ENCODE measurements at regions of chr10 and their contacts with region 1.

Region 1: GRCh38 chr10:91251430-91252056 is 31.1 kb downstream of the PCGF5 start:
- DNase-seq: peak; percentile 31 to 65 (median 41)
- H3K4me3 ChIP-seq: no peak overlapping the region
- H3K27ac ChIP-seq: no peak overlapping the region
- H3K4me1 ChIP-seq: no peaks in the 10 kb centered on the region
- H3K27me3 ChIP-seq: no peaks in the 10 kb centered on the region
- CTCF ChIP-seq: peak; percentile 86 to 90 (median 90)
- EP300 ChIP-seq: no peak
- POLR2A ChIP-seq: no peak

Region 2: GRCh38 chr10:90912174-90912573 is 339.4 kb before region 1 on chr10:
- intact Hi-C with region 1: loop called in 3 of 4 experiments (anchors 5 to 10 kb)
- DNase-seq: no peak
- H3K4me3 ChIP-seq: no peak overlapping the region
- H3K27ac ChIP-seq: no peak overlapping the region
- H3K4me1 ChIP-seq: no peaks in the 10 kb centered on the region
- H3K27me3 ChIP-seq: no peaks in the 10 kb centered on the region
- CTCF ChIP-seq: no peak
- EP300 ChIP-seq: no peak
- POLR2A ChIP-seq: no peak

Region 3: DNA sequence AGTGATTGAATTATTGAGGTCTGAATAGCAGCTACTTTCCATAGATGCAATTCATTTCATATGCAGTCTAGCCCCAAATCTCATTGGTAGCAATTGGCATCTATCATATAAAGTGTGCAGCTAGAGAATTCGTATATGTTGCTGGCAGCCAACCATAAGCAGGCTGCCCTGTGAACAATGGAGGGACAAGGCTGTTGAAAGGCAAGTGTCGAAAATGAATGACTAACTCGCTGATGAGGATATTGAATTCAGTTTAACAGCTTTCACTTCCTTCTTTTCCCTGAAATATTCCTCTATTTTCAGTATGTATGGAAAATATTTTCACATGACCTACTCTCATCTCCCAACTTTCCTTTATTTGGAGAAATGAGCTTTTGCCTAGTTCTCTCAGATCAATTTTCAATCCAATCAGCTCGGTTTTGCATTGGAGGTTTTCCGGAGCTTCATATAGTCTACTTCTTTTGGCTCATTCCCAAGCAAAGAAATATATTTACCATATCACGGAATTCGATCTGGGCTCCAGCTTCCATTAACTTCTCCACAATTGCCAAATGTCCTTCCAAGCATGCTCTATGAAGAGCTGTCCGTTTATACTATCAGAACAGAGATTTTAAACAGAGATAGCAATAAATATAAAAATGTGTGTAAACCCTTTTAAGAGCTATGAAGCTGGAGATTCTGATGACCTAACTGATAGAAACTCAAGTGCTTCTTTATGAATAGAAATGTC is 334.1 kb before region 1 on chr10:
- intact Hi-C with region 1: loop called in 3 of 4 experiments (anchors 5 to 10 kb)
- DNase-seq: no peak
- H3K4me3 ChIP-seq: no peak overlapping the region
- H3K27ac ChIP-seq: no peak overlapping the region
- H3K4me1 ChIP-seq: peaks cover 1% of the 10 kb centered on the region
- H3K27me3 ChIP-seq: no peaks in the 10 kb centered on the region
- CTCF ChIP-seq: no peak
- EP300 ChIP-seq: no peak
- POLR2A ChIP-seq: no peak

Region 4: DNA sequence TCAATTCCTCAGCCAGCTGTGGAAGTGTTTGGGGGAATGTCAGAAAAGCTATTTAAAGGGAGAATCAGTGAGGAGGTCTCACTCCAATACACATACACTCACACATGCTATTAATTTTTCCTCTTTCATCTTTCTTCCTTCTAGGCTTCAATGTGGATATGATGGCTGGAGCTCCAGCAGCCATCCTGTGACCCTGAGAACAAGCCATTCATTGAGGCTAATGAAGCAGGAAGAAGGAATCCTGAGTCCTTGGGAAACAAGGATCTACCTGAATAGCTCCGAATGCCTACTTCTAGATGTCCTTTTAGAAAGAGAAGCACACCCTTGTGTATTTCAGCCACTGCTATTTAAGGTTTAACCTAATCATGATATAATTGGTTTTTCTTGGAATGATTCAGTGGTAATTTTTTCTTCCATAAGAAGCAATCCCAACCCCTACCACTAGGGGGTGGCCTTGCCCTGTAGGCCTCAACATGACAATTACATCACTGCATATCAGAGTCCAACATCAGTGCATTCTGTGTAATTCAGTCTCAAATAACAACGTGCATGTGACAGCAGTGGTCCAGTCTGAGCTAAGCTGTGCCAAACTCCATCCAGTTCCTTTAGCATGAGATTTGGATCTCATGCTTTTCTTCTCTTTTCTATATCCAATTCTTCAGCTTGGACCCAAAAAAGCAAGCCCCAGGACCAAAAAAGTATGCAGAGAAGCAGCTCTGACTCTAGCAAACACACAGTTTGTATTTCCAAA is 245.4 kb before region 1 on chr10:
- intact Hi-C with region 1: loop called in 3 of 4 experiments (anchors 5 to 10 kb)
- DNase-seq: peak; percentile 34 to 67 (median 53)
- H3K4me3 ChIP-seq: no peak overlapping the region
- H3K27ac ChIP-seq: no peak overlapping the region
- H3K4me1 ChIP-seq: no peaks in the 10 kb centered on the region
- H3K27me3 ChIP-seq: no peaks in the 10 kb centered on the region
- CTCF ChIP-seq: peak; percentile 62 to 93 (median 89)
- EP300 ChIP-seq: no peak
- POLR2A ChIP-seq: no peak

Region 5: GRCh38 chr10:91163269-91163868 is 88.2 kb before region 1 on chr10:
- intact Hi-C with region 1: loop called in 1 of 4 experiments (anchors 10 kb)
- DNase-seq: peak; percentile 61 to 82 (median 76)
- H3K4me3 ChIP-seq: peak overlapping the region; percentile 98
- H3K27ac ChIP-seq: peak overlapping the region; percentile 100
- H3K4me1 ChIP-seq: peaks cover 1% of the 10 kb centered on the region
- H3K27me3 ChIP-seq: no peaks in the 10 kb centered on the region
- CTCF ChIP-seq: peak in 1 of 3 donors; percentile 27
- EP300 ChIP-seq: no peak
- POLR2A ChIP-seq: peak; percentile 35

Measured in ovary (tissue), 10 donors.